Transverse colon (tissue), 4 donors: ENCODE measurements at regions of chr6 and their contacts with region 1.

Region 1: GRCh38 chr6:48520951-48521350 is 410.0 kb upstream of the PTCHD4 start:
- DNase-seq: no peak
- H3K4me3 ChIP-seq: no peak overlapping the region
- H3K27ac ChIP-seq: no peak overlapping the region
- H3K4me1 ChIP-seq: no peaks in the 10 kb centered on the region
- H3K27me3 ChIP-seq: no peaks in the 10 kb centered on the region
- CTCF ChIP-seq: no peak
- EP300 ChIP-seq: no peak
- POLR2A ChIP-seq: no peak

Region 2: DNA sequence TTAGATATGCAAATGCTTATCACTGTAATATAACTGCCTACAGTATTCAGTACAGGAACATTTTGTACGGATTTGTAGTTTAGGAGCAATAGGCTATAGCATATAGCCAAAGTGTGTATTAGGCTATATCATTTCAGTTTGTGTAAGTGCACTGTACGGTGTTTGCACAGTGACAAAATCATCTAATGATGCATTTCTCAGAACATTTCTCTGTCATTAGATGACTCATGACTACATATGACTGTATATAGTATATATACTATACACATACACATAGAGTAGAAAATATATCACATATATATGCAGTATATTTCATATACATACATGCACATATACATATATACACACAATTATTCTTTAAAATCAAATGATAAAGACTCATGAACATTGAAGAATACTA is 568.3 kb before region 1 on chr6:
- in situ Hi-C with region 1: no loop called
- intact Hi-C with region 1: loop called (anchors 10 kb)
- DNase-seq: no peak
- H3K4me3 ChIP-seq: no peak overlapping the region
- H3K27ac ChIP-seq: no peak overlapping the region
- H3K4me1 ChIP-seq: no peaks in the 10 kb centered on the region
- H3K27me3 ChIP-seq: no peaks in the 10 kb centered on the region
- CTCF ChIP-seq: no peak
- EP300 ChIP-seq: no peak
- POLR2A ChIP-seq: no peak